ENCODE measurements at regions of chr3 and their contacts with region 1.

Region 1: GRCh38 chr3:108180194-108180593 is 42.0 kb downstream of the IFT57 start:
- DNase-seq: no peak
- ATAC-seq: no peak
- H3K4me3 ChIP-seq: no peak overlapping the region
- H3K4me3 Mint-ChIP-seq: no peak overlapping the region
- H3K27ac ChIP-seq: no peak overlapping the region
- H3K27ac Mint-ChIP-seq: no peak overlapping the region
- H3K4me1 ChIP-seq: peaks cover 0 to 11% of the 10 kb centered on the region in 2 donors
- H3K4me1 Mint-ChIP-seq: peaks cover 47% of the 10 kb centered on the region
- H3K27me3 ChIP-seq: no peaks in the 10 kb centered on the region
- H3K27me3 Mint-ChIP-seq: no peaks in the 10 kb centered on the region
- CTCF ChIP-seq: no peak

Region 2: GRCh38 chr3:108130701-108131474 is 49.3 kb before region 1 on chr3:
- CTCF ChIA-PET with region 1: no interaction called
- POLR2A ChIA-PET with region 1: no interaction called
- intact Hi-C with region 1: loop called (anchors 10 kb)
- DNase-seq: peak; percentile 39
- ATAC-seq: no peak
- H3K4me3 ChIP-seq: peak overlapping the region in 1 of 5 experiments; percentile 49
- H3K4me3 Mint-ChIP-seq: peak overlapping the region; percentile 62
- H3K27ac ChIP-seq: peak overlapping the region; percentile 91 to 99
- H3K27ac Mint-ChIP-seq: peak overlapping the region; percentile 85
- H3K4me1 ChIP-seq: peaks cover 97% of the 10 kb centered on the region in 2 donors
- H3K4me1 Mint-ChIP-seq: peaks cover 91% of the 10 kb centered on the region
- H3K27me3 ChIP-seq: no peaks in the 10 kb centered on the region
- H3K27me3 Mint-ChIP-seq: no peaks in the 10 kb centered on the region
- CTCF ChIP-seq: no peak

Measured in B cell (primary cell).